PC-3 (cell line): ENCODE measurements at regions of chr6 and their contacts with region 1.

Region 1: GRCh38 chr6:157614026-157614568 is 208.9 kb upstream of the SNX9 start:
- DNase-seq: peak; percentile 68
- ATAC-seq: peak; percentile 67
- H3K4me3 ChIP-seq: peak overlapping the region; percentile 67; the same call in 1 of the 2 replicates
- H3K27ac ChIP-seq: peak overlapping the region; percentile 99
- H3K4me1 ChIP-seq: peaks cover 38% of the 10 kb centered on the region
- H3K27me3 ChIP-seq: no peaks in the 10 kb centered on the region
- CTCF ChIP-seq: peak; percentile 47

Region 2: DNA sequence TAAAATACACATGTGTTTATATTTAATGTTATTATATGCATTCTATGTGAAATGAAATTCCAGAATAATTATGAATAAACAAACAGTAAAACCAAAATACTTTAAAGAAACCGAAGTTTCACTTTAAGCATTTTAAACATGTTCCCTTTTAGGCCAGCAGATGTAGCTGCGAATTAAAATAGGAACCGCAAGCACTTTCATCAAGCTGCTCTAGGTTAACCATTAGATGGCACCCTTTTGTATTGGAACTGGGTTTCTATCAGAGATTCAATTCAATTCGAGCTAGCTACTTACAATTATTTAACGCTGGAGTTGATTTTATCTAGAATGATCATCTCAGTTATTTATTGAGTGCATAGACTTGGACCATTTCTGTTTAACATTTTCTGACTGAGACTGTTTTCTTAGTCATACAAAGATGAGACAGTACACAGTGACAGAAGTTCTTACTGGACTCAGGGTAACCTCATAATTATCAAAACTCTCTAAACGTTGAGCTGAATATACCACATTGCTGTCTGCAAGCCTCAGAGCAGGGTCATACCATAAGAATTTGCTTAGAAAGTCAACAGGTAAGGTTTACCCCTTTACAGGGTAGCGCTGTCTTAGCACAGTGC is 299.3 kb before region 1 on chr6:
- CTCF ChIA-PET with region 1: interaction called, 24 read pairs
- POLR2A ChIA-PET with region 1: no interaction called
- intact Hi-C with region 1: loop called (anchors 1 kb)
- DNase-seq: peak; percentile 75
- ATAC-seq: peak; percentile 66
- H3K4me3 ChIP-seq: no peak overlapping the region
- H3K27ac ChIP-seq: no peak overlapping the region
- H3K4me1 ChIP-seq: peaks cover 14% of the 10 kb centered on the region
- H3K27me3 ChIP-seq: no peaks in the 10 kb centered on the region
- CTCF ChIP-seq: peak; percentile 96

Region 3: GRCh38 chr6:157428427-157429202 is 185.5 kb before region 1 on chr6:
- CTCF ChIA-PET with region 1: interaction called, 4 read pairs
- POLR2A ChIA-PET with region 1: no interaction called
- intact Hi-C with region 1: loop called (anchors 2 kb)
- DNase-seq: peak; percentile 95
- ATAC-seq: peak; percentile 93
- H3K4me3 ChIP-seq: peak overlapping the region; percentile 57; the same call in 1 of the 2 replicates
- H3K27ac ChIP-seq: peak overlapping the region; percentile 74
- H3K4me1 ChIP-seq: peaks cover 42% of the 10 kb centered on the region
- H3K27me3 ChIP-seq: no peaks in the 10 kb centered on the region
- CTCF ChIP-seq: no peak

Region 4: DNA sequence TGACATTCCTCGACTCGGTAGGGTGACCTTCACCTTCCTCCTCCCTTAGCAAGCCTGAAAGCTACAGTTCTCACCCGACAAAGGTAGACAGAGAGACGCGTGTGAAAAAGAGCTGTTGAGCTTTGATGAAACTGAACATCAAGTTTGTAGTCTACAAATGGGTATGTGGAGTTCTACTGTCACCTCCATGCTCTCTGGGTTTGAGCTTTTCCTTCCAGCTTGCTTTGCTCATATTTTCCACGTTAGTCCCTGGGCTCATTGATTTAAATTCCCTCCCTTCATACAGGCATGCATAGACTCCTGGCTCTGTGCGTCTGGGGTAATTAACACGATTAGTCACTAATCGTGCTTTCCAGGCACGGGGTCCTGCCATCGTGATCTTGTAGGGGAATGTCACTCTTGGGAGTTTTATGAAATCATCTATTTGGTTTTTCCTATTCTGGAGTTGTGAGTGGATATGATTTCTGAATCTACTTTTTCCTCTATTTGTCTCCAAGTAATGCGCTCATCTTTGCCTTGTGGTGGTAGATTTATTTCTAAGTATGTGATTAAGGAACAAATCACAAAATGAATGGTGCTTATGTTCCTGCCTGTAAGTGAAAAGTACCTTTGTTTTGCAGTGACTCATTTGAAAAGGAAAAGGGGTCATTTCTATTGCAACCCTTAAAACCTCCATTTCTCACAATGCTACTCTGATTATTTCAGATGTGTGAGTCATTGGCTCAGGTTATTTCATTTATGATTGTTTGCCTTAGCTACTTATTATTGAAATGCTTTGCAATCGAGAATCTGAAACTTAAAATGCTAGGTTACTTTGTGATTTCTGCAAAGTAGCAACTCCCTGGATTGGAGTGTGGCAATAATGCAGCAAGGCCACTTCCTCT is 78.5 kb before region 1 on chr6:
- CTCF ChIA-PET with region 1: no interaction called
- POLR2A ChIA-PET with region 1: no interaction called
- intact Hi-C with region 1: loop called (anchors 10 kb)
- DNase-seq: peak; percentile 81
- ATAC-seq: peak; percentile 94
- H3K4me3 ChIP-seq: peak overlapping the region; percentile 34; the same call in 1 of the 2 replicates
- H3K27ac ChIP-seq: peak overlapping the region; percentile 83
- H3K4me1 ChIP-seq: peaks cover 17% of the 10 kb centered on the region
- H3K27me3 ChIP-seq: no peaks in the 10 kb centered on the region
- CTCF ChIP-seq: no peak

Region 5: DNA sequence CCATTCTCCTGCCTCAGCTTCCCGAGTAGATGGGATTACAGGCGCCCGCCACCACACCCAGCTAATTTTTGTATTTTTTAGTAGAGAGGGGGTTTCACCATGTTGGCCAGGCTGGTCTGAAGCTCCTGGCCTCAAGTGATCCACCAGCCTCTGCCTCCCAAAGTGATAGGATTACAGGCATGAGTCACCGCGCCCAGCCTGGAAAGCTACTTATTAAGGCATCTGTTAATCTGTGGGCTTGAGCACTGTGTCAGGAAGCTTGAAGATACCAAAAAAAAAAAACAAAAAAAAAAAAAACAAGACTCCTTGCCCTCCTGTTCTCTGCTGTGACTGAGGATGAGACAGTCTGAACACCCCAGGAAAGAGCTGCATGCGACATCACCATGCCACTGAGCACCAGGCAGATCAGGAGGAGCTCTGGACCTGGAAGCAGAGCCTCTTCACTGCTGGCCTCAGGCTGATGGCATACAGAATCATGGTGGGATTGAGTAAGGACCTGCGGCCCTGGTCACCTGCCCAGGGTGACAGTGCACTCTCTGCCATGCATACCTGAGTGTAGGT is 42.4 kb after region 1 on chr6:
- CTCF ChIA-PET with region 1: no interaction called
- POLR2A ChIA-PET with region 1: interaction called, 24 read pairs
- intact Hi-C with region 1: no loop called
- DNase-seq: no peak
- ATAC-seq: no peak
- H3K4me3 ChIP-seq: no peak overlapping the region
- H3K27ac ChIP-seq: no peak overlapping the region
- H3K4me1 ChIP-seq: no peaks in the 10 kb centered on the region
- H3K27me3 ChIP-seq: no peaks in the 10 kb centered on the region
- CTCF ChIP-seq: no peak

Region 6: GRCh38 chr6:157688960-157689599 is 75.0 kb after region 1 on chr6:
- CTCF ChIA-PET with region 1: no interaction called
- POLR2A ChIA-PET with region 1: no interaction called
- intact Hi-C with region 1: no loop called
- DNase-seq: peak; percentile 33
- ATAC-seq: peak; percentile 68
- H3K4me3 ChIP-seq: no peak overlapping the region; the same call in 1 of the 2 replicates
- H3K27ac ChIP-seq: no peak overlapping the region
- H3K4me1 ChIP-seq: peaks cover 21% of the 10 kb centered on the region
- H3K27me3 ChIP-seq: no peaks in the 10 kb centered on the region
- CTCF ChIP-seq: no peak

Region 7: GRCh38 chr6:157756708-157757429 is 142.8 kb after region 1 on chr6:
- CTCF ChIA-PET with region 1: interaction called, 4 read pairs
- POLR2A ChIA-PET with region 1: no interaction called
- intact Hi-C with region 1: loop called (anchors 5 kb)
- DNase-seq: peak; percentile 83
- ATAC-seq: peak; percentile 49
- H3K4me3 ChIP-seq: peak overlapping the region; percentile 27; the same call in 1 of the 2 replicates
- H3K27ac ChIP-seq: no peak overlapping the region
- H3K4me1 ChIP-seq: peaks cover 33% of the 10 kb centered on the region
- H3K27me3 ChIP-seq: no peaks in the 10 kb centered on the region
- CTCF ChIP-seq: peak; percentile 79